AG04450 (cell line): ENCODE measurements at regions of chr7 and their contacts with region 1.

Region 1: DNA sequence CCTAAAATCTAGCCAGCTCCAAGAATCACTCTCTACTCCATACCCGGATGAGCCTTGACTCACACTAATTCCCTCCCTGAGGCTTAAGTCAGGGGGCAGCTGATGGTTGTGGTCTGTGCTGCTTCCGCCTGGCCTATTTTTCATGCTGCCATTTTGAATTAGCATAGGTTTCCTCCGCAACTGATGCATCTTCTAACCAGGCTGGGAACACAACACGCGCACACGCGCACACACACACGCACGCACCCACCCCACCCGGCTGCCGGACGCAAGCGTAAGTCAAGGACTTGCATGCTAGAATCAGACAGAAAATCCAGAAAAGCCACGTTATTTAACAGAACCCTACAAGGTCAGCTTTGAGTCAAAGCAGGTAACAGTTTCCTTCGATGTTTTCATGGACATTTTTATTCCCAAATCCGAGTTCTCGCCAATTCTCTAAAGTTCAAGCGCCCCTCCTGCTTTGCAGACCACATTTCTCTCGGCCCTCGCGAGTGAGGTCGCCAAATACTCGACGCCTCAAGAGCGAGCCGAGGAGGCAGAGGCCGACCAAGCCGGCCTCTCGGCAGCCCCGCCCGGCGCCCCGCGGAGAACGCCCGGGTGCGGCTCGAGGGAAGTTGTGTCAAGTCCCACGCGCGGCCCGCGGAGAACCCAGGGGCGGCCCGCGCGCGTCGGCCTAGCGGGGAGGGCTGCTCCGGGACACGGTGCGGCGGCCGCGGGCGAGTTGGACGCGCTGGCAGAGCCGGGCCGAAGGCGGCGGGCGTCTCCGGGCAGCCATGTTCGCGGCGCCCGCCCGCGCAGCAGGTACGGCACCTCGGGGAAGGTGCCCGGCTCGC is 961 bp downstream of the SCRN1 start:
- DNase-seq: no peak
- H3K4me3 ChIP-seq: peak overlapping the region; percentile 82
- H3K27ac ChIP-seq: peak overlapping the region; percentile 91
- H3K27me3 ChIP-seq: no peaks in the 10 kb centered on the region
- CTCF ChIP-seq: no peak

Region 2: GRCh38 chr7:29976673-29977415 is 11.8 kb before region 1 on chr7:
- CTCF ChIA-PET with region 1: interaction called, 10 read pairs
- POLR2A ChIA-PET with region 1: interaction called, 6 read pairs
- DNase-seq: no peak
- H3K4me3 ChIP-seq: no peak overlapping the region
- H3K27ac ChIP-seq: no peak overlapping the region
- H3K27me3 ChIP-seq: no peaks in the 10 kb centered on the region
- CTCF ChIP-seq: no peak